Heart right ventricle (tissue), 16 donors: ENCODE measurements at regions of chr2 and their contacts with region 1.

Region 1: GRCh38 chr2:38239461-38239860 is 137.6 kb downstream of the ATL2 start:
- DNase-seq: no peak
- ATAC-seq: peak in 2 of 8 donors; percentile 9 to 56
- H3K4me3 ChIP-seq: no peak overlapping the region
- H3K27ac ChIP-seq: no peak overlapping the region
- H3K4me1 ChIP-seq: no peaks in the 10 kb centered on the region
- H3K27me3 ChIP-seq: no peaks in the 10 kb centered on the region
- CTCF ChIP-seq: no peak

Region 2: GRCh38 chr2:36777788-36778187 is 1461.7 kb before region 1 on chr2:
- intact Hi-C with region 1: loop called in 1 of 10 experiments (anchors 5 kb)
- DNase-seq: no peak
- ATAC-seq: no peak
- H3K4me3 ChIP-seq: no peak overlapping the region
- H3K27ac ChIP-seq: no peak overlapping the region
- H3K4me1 ChIP-seq: peaks cover 0 to 25% (median 6%) of the 10 kb centered on the region in 9 donors
- H3K27me3 ChIP-seq: no peaks in the 10 kb centered on the region
- CTCF ChIP-seq: no peak

Region 3: GRCh38 chr2:37993143-37993542 is 246.3 kb before region 1 on chr2:
- intact Hi-C with region 1: no loop called
- DNase-seq: no peak
- ATAC-seq: no peak
- H3K4me3 ChIP-seq: no peak overlapping the region
- H3K27ac ChIP-seq: no peak overlapping the region
- H3K4me1 ChIP-seq: peaks cover 0 to 4% (median 0%) of the 10 kb centered on the region in 9 donors
- H3K27me3 ChIP-seq: no peaks in the 10 kb centered on the region
- CTCF ChIP-seq: no peak